BJ (cell line): ENCODE measurements at regions of chr6 and their contacts with region 1.

Region 1: GRCh38 chr6:56595490-56596122 is 47.1 kb downstream of the DST start:
- DNase-seq: no peak
- H3K4me3 ChIP-seq: no peak overlapping the region
- H3K27me3 ChIP-seq: no peaks in the 10 kb centered on the region
- CTCF ChIP-seq: peak; percentile 63

Region 2: DNA sequence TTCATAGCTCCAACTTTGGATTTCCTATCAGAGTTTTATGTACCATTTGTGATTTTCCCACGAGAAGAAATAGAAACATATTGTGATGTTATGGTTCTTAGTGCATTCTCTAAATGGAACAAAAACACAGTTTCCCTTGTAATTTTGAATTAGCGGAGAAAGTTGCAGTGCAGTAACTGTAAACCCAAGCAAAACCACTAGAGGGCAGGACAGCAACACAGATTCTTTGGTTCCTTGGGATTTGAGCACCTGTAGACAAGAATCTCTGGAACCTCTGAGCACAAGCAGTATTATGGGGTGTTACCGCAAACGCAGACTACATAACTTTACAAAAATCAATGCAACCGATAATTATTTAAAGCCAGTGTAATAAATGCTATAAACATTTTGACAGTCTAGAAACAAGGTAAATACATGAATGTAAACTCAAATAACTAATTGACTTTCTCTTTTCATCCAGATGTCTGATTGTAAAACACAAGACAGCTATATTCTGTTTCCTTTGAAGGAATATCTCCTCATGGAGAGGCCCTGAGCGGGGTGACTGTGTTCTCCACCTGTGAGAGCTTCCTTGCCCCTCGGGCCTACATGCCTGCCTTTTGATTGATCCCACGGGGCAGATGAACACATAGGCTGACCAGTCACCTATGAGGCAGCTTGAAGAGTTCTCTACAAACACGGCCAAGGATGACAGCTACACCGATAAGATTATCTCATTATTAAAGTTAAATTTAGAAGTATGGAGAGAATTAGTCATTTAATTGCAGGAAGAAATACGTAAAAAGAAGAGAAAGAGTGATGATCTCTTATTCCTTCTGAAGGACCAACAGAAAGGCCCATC is 280.7 kb before region 1 on chr6:
- CTCF ChIA-PET with region 1: interaction called, 61 read pairs
- POLR2A ChIA-PET with region 1: no interaction called
- DNase-seq: no peak
- H3K4me3 ChIP-seq: no peak overlapping the region
- H3K27me3 ChIP-seq: peaks cover 2% of the 10 kb centered on the region; the same call in 1 of the 2 replicates
- CTCF ChIP-seq: peak; percentile 85

Region 3: DNA sequence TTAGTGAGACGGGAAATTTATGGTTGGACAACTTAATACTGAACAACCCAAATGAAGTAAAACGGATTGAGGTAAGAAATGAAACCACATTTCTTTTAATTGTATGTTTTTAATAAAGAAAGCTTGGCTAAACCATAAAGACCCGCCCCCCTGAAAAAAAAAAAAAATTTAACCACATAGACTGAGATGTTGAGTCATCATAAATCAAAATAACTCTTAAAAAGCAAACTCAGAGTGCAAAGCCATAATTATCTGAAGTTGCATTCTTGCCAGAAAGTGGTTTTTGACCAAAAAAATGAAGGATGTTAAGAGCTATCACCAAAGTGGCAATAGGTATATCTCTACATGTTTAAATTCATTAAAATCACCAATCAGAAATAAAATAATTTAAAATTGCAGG is 246.4 kb before region 1 on chr6:
- CTCF ChIA-PET with region 1: interaction called, 10 read pairs
- POLR2A ChIA-PET with region 1: no interaction called
- DNase-seq: no peak
- H3K4me3 ChIP-seq: no peak overlapping the region
- H3K27me3 ChIP-seq: no peaks in the 10 kb centered on the region
- CTCF ChIP-seq: no peak

Region 4: DNA sequence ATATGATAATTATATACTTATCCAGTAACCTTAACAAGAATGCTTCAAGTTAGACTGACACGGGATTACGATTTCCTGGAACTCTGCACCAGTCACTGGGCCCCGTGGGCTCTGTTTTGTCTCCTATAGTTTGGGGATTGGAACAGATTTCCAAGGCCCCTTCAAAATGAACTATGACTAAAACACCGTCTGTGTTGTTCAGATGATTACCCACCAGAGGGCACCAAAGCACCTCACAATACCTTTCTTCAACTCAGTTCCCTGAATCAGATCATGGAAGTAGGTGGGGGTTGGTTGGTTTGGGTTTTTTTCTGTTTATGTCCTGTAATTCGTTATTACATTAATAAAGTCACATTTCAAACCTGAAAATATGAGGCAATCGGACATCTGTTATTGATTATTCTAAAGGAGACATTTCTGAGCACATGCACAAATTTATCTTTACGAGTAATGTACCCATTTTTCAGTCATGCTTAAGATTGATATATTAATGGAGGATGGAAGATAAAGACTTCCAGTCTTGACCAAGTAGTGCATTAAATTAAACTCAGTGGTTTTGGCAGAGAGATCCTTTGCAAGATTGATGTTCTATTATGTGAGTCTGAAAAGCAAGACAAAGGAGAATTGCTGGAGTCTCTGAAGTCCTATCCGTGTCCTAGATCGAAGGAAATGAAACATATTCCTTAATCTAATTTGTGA is 236.3 kb before region 1 on chr6:
- CTCF ChIA-PET with region 1: interaction called, 15 read pairs
- POLR2A ChIA-PET with region 1: no interaction called
- DNase-seq: no peak
- H3K4me3 ChIP-seq: no peak overlapping the region
- H3K27me3 ChIP-seq: no peaks in the 10 kb centered on the region
- CTCF ChIP-seq: peak; percentile 59

Region 5: GRCh38 chr6:56370561-56371211 is 224.9 kb before region 1 on chr6:
- CTCF ChIA-PET with region 1: interaction called, 47 read pairs
- POLR2A ChIA-PET with region 1: no interaction called
- DNase-seq: peak; percentile 52
- H3K4me3 ChIP-seq: no peak overlapping the region
- H3K27me3 ChIP-seq: no peaks in the 10 kb centered on the region
- CTCF ChIP-seq: no peak

Region 6: GRCh38 chr6:56570413-56571359 is 24.9 kb before region 1 on chr6:
- CTCF ChIA-PET with region 1: interaction called, 26 read pairs
- POLR2A ChIA-PET with region 1: no interaction called
- DNase-seq: no peak
- H3K4me3 ChIP-seq: no peak overlapping the region
- H3K27me3 ChIP-seq: no peaks in the 10 kb centered on the region
- CTCF ChIP-seq: peak; percentile 58

Region 7: DNA sequence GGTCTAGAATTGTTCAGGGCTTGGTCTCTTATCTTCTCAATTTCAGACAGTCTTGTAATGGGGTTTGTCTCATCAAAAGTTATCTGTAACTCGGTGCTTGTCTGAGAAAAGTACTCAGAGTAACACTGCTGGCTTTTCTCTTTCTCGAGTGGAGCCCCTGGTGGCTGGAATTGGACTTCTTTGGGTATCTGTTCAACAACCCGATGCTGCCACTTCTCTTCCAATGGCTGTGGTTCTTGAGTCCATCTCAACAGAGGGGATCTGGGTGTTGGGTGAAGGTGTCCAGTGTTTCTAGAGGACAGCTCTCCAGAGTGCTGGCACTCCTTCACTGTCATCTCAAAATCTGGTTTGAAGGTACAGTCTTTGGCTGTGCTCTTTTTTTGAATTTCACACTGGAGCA is 22.4 kb after region 1 on chr6:
- CTCF ChIA-PET with region 1: interaction called, 80 read pairs
- POLR2A ChIA-PET with region 1: no interaction called
- DNase-seq: no peak
- H3K4me3 ChIP-seq: no peak overlapping the region
- H3K27me3 ChIP-seq: no peaks in the 10 kb centered on the region
- CTCF ChIP-seq: peak; percentile 22; the same call in 1 of the 2 replicates

Region 8: DNA sequence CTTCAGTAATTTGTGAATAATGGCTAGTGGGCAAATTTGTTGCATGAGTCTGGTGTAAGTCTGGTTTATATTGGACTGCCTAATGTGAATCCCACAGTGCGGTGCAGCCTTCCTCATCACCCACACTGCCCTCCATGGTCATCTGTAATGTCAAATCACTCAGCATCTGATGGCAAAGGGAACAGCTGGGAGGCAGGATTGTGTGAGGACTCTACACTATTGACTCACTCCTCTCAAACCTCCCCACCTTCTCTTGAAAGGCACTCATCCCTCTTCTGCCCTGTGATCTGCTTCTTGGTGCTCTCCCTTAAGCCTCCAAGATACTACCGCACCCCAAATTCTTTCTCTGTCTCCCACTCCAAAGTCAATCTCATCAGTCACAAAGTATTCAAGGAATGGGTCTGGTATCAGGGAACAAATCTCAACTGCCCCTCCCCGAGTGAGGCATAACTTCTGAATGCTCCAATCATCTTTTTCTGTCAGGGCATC is 213.3 kb after region 1 on chr6:
- CTCF ChIA-PET with region 1: no interaction called
- POLR2A ChIA-PET with region 1: no interaction called
- DNase-seq: no peak
- H3K4me3 ChIP-seq: no peak overlapping the region
- H3K27me3 ChIP-seq: no peaks in the 10 kb centered on the region
- CTCF ChIP-seq: no peak